ENCODE measurements at regions of chr12 and their contacts with region 1.

Region 1: DNA sequence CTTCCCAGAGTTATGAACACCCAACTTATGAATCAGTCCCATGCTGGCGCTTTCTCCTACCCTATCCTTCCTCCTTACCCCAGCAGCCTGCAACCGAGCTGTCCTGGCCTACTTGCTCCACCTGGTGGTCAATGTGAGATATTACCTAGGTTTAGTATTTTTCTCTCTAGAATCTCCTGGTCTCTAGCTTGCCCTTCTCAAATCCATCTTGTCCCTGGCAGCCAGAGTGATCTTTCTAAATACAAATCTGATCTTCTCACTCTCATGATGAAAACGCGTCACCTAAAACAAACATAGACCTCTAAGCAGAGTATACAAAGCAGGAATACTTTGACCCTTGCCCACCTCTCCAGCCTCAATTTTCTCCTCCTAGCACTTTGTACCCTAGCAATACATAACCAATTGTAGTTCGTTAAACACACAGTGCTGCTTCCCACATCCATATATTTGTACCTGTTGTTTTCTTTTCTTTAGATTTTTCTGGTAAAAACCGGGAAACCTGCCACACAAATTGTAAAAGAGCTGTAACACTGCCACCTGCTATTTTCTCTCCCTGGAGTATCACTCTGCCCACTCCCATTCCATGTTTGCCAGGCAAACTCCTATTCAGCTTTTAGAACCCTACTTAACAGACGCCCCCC is 20.0 kb upstream of the TCP11L2 start:
- DNase-seq: peak; percentile 81
- H3K4me3 ChIP-seq: peak overlapping the region in 1 of 8 donors; percentile 31
- H3K27ac ChIP-seq: peak overlapping the region in 4 of 8 donors; percentile 34 to 81 (median 70)
- H3K4me1 ChIP-seq: peaks cover 0 to 12% (median 7%) of the 10 kb centered on the region in 6 donors
- H3K27me3 ChIP-seq: peaks cover 0 to 19% (median 0%) of the 10 kb centered on the region in 7 donors
- CTCF ChIP-seq: peak; percentile 26 to 84 (median 73)
- POLR2A ChIP-seq: no peak

Region 2: GRCh38 chr12:106195621-106196027 is 87.0 kb before region 1 on chr12:
- intact Hi-C with region 1: no loop called
- DNase-seq: peak; percentile 42
- H3K4me3 ChIP-seq: no peak overlapping the region
- H3K27ac ChIP-seq: no peak overlapping the region
- H3K4me1 ChIP-seq: no peaks in the 10 kb centered on the region
- H3K27me3 ChIP-seq: peaks cover 0 to 21% (median 0%) of the 10 kb centered on the region in 7 donors
- CTCF ChIP-seq: no peak
- POLR2A ChIP-seq: no peak

Region 3: GRCh38 chr12:106223485-106224354 is 58.9 kb before region 1 on chr12:
- intact Hi-C with region 1: loop called (anchors 2 kb)
- DNase-seq: peak; percentile 90
- H3K4me3 ChIP-seq: no peak overlapping the region
- H3K27ac ChIP-seq: no peak overlapping the region
- H3K4me1 ChIP-seq: peaks cover 0 to 24% (median 16%) of the 10 kb centered on the region in 6 donors
- H3K27me3 ChIP-seq: peaks cover 0 to 19% (median 0%) of the 10 kb centered on the region in 7 donors
- CTCF ChIP-seq: peak; percentile 74 to 94 (median 89)
- POLR2A ChIP-seq: no peak